Endothelial cell of umbilical vein (primary cell): ENCODE measurements at regions of chr14 and their contacts with region 1.

Region 1: GRCh38 chr14:54722781-54723432 is 156.0 kb downstream of the SAMD4A start:
- DNase-seq: peak; percentile 47
- H3K4me3 ChIP-seq: no peak overlapping the region
- H3K27ac ChIP-seq: no peak overlapping the region
- H3K4me1 ChIP-seq: peaks cover 6% of the 10 kb centered on the region
- H3K27me3 ChIP-seq: no peaks in the 10 kb centered on the region
- CTCF ChIP-seq: peak; percentile 24 to 30
- POLR2A ChIP-seq: no peak

Region 2: DNA sequence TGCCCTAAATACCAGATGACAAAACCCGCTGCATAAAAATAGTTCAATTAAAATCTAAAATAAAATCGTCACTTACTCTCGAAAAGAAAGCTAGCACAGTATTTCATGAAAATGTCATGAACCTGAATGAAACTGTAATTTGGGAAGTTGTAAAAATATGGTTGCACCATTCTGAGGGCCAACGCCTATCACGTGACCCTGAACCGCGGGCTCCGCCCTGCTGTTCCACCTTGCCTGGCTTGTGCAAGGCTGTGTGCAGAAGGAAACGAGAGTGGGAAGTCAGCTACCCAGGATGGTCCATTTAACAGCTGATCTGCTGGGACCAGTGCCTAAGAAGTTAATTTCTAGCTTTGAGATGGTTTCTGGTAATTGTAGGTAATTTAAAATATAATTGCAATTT is 674.6 kb before region 1 on chr14:
- CTCF ChIA-PET with region 1: no interaction called
- POLR2A ChIA-PET with region 1: no interaction called
- dilution Hi-C with region 1: no loop called
- intact Hi-C with region 1: no loop called
- DNase-seq: no peak
- H3K4me3 ChIP-seq: no peak overlapping the region
- H3K27ac ChIP-seq: no peak overlapping the region
- H3K4me1 ChIP-seq: no peaks in the 10 kb centered on the region
- H3K27me3 ChIP-seq: no peaks in the 10 kb centered on the region
- CTCF ChIP-seq: no peak
- POLR2A ChIP-seq: no peak

Region 3: DNA sequence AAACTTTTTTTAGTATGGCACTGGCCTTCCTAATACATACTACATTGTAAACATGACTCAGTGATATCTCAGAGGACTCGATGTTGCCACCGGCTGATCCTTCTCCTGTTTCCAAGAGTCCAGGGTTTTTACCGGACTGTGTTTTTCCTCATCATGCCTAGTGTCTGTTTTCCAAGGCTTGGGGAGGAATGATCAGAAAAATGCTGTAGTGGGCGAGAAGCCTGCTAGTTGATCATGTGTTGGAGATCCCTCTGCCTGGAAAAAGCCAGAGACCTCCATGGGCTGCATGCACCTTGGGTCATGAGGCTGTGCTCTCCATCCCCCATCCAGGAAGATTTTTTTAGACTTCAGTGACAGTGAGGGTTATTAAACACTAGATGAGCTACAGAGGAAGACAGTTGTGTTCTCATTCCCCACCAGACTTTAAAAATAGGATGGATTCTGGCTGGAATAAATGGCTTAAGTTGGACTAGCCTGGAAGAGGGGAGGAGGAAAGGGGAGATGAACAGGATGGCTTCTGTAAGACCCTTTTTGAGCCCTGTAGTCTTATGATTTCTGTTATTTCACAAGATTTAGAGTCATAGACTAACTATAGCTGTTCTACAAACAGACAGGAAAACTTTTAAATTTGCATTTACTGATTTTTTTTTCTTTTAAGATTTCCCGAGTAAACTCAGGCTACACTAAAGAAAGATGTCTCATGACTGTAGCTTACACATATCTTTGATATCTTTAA is 10.3 kb before region 1 on chr14:
- CTCF ChIA-PET with region 1: interaction called, 12 read pairs
- POLR2A ChIA-PET with region 1: no interaction called
- dilution Hi-C with region 1: no loop called
- intact Hi-C with region 1: no loop called
- DNase-seq: peak; percentile 71
- H3K4me3 ChIP-seq: no peak overlapping the region
- H3K27ac ChIP-seq: peak overlapping the region; percentile 32
- H3K4me1 ChIP-seq: peaks cover 16% of the 10 kb centered on the region
- H3K27me3 ChIP-seq: no peaks in the 10 kb centered on the region
- CTCF ChIP-seq: no peak
- POLR2A ChIP-seq: no peak

Region 4: DNA sequence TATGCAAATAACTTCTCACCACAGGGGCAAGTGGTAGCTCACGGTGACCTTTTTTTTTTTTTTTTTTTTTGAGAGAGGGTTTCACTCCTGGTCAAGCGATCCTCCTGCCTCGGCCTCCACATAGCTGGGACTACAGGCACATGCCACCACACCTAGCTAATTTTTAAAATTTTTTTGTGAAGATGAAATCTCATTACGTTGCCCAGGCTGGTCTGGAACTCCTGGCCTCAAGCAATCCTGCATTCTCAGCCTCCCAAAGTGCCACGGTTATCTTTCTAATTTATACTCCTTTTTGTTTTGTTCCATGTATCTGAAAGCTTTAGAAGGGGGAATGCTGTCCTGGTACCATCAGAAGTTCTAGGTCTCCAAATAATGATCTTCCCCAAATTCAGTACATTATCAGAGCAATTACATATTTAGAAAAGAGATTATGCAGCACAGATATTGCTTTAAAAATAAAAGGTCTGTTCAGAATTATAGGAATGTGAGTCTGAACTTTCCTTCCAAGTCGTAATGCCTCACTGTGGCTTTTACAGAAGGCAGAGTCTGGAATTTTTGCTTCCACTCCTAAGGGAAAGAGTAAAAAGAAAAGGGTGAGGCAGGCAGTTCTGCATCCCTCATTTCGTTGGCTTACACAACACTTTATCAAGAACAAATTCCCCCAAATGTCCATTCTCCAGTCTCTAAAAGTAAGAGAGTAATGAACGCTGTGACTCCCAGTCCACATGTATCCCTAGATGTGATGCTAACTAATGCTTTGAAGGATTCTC is 106.7 kb after region 1 on chr14:
- CTCF ChIA-PET with region 1: no interaction called
- POLR2A ChIA-PET with region 1: no interaction called
- dilution Hi-C with region 1: no loop called
- intact Hi-C with region 1: no loop called
- DNase-seq: no peak
- H3K4me3 ChIP-seq: no peak overlapping the region
- H3K27ac ChIP-seq: no peak overlapping the region
- H3K4me1 ChIP-seq: no peaks in the 10 kb centered on the region
- H3K27me3 ChIP-seq: peaks cover 11 to 13% of the 10 kb centered on the region in 2 experiments
- CTCF ChIP-seq: no peak
- POLR2A ChIP-seq: no peak